Sigmoid colon (tissue), 7 donors: ENCODE measurements at regions of chr5 and their contacts with region 1.

Region 1: DNA sequence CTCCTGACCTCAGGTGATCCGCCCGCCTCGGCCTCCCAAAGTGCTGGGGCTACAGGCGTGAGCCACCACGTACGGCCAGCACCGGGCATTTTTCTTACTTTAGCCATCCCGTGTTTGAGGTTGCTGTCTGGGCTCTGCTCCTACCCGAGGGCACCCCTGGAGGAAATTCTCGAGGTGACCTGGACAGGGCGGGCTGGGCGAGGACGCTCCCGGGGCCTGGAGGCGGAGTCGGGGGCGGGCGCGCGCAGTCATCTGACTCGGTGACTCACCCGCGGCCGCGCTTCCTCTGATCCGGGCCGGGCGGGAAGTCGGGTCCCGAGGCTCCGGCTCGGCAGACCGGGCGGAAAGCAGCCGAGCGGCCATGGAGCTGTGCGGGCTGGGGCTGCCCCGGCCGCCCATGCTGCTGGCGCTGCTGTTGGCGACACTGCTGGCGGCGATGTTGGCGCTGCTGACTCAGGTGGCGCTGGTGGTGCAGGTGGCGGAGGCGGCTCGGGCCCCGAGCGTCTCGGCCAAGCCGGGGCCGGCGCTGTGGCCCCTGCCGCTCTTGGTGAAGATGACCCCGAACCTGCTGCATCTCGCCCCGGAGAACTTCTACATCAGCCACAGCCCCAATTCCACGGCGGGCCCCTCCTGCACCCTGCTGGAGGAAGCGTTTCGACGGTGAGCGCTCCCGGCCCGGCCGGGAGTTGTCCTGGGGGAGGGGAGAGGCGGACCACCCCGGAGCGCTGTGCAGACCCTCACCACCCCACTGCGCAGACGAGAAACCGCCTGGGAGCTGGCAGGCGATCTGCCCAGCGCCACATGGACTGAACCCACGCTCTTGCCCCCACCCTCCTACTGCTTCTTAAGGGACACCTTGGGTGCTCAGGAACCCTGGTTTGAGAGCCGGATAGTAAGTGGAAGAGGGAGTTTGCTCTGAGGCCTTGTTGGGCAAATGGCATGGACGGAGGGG is at the start of gene HEXB:
- DNase-seq: peak; percentile 95
- H3K4me3 ChIP-seq: peak within 1 kb of the TSS; percentile 70 to 96 (median 93)
- H3K27ac ChIP-seq: peak within 1 kb of the TSS; percentile 86 to 91 (median 90)
- H3K4me1 ChIP-seq: peaks cover 0 to 22% (median 16%) of the 10 kb centered on the region in 4 donors
- H3K27me3 ChIP-seq: no peaks in the 10 kb centered on the region
- CTCF ChIP-seq: no peak
- EP300 ChIP-seq: no peak
- POLR2A ChIP-seq: peak; percentile 54 to 67
- total RNA-seq, gene HEXB: 76.2 to 132 (median 108) TPM

Region 2: DNA sequence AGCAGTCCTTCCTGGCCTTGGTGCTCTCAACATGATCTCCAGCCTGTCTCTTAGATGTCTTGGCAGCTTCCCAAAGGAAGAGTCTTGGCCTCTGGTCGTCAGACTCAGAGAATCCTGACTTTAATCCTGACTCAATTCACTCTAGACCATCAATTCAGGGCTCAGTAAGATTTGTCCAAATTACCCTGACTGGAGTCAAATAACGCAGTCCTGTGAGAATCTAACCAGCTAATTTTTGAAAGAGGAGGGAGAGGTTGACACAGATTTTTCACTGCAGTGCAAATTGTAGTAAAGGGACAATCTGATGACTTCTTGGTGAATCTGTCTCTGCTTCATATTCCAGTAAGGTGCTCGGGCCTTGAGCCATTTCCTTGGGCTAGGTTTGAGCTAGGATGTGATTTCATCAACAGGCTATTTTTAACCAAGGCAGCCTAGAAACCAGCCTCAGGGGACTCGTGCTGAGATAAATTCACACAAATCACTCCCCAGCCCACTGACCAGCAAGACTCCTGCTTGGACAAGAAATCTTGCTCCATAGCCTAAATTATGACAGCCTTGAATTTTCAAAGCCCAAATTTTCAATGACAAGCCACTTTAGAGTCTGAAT is 302.1 kb before region 1 on chr5:
- intact Hi-C with region 1: no loop called
- DNase-seq: peak; percentile 78
- H3K4me3 ChIP-seq: no peak overlapping the region
- H3K27ac ChIP-seq: peak overlapping the region in 3 of 4 donors; percentile 11 to 54 (median 31)
- H3K4me1 ChIP-seq: peaks cover 0 to 17% (median 4%) of the 10 kb centered on the region in 4 donors
- H3K27me3 ChIP-seq: no peaks in the 10 kb centered on the region
- CTCF ChIP-seq: no peak
- EP300 ChIP-seq: no peak
- POLR2A ChIP-seq: no peak

Region 3: DNA sequence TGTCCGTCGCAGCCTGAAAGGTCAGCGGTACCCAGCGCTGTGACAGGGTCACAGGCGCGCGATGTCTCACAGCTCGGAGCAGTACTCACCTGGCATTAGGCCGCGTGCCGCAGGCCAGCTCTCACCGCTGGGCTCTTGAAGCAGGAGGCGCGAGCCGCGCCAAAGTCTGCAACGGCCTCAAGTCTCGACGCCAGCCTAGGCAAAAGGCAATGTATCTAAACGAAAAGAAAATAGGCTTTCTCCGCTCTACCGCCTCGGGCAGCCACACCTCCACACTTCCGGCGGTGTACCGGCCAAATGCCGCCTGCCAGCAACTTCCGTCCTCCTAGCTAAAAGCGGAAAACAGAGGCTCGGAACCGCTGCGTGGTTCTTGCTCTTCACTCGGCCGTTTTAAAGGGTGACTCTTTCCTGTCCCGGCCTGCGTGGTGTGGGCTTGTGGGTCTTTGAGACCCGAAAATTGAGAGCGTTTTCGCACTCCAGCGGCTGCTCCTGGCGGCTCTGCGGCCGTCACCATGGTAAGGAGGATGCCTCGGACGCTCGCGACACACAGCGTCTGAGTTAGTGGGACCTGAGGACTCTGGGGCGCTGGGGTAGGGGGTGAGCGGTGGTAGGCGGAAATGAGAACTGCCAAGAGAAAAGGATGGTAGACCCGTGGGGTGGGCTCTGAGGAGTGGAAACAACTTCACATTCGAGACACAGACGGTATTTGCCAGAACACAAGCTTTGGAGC is 81.8 kb after region 1 on chr5 and contains the starts of genes GFM2 and NSA2:
- intact Hi-C with region 1: loop called (anchors 2 kb)
- DNase-seq: peak; percentile 94
- H3K4me3 ChIP-seq: peak within 1 kb of the TSS; percentile 92 to 96 (median 94)
- H3K27ac ChIP-seq: peak within 1 kb of the TSS; percentile 79 to 89 (median 84)
- H3K4me1 ChIP-seq: peaks cover 0 to 32% (median 27%) of the 10 kb centered on the region in 4 donors
- H3K27me3 ChIP-seq: no peaks in the 10 kb centered on the region
- CTCF ChIP-seq: no peak
- EP300 ChIP-seq: no peak
- POLR2A ChIP-seq: peak in 1 of 2 donors; percentile 24
- total RNA-seq, gene GFM2: 16.0 to 21.4 (median 17.0) TPM
- total RNA-seq, gene NSA2: 141 to 182 (median 168) TPM